Sigmoid colon (tissue), 7 donors: ENCODE measurements at regions of chr1 and their contacts with region 1.

Region 1: GRCh38 chr1:93909146-93910050 is at the start of gene GCLM:
- DNase-seq: peak; percentile 95
- H3K4me3 ChIP-seq: peak within 1 kb of the TSS; percentile 64 to 97 (median 75)
- H3K27ac ChIP-seq: peak within 1 kb of the TSS; percentile 83 to 93 (median 89)
- H3K4me1 ChIP-seq: peaks cover 0 to 16% (median 16%) of the 10 kb centered on the region in 4 donors
- H3K27me3 ChIP-seq: no peaks in the 10 kb centered on the region
- CTCF ChIP-seq: peak; percentile 40 to 87 (median 52)
- EP300 ChIP-seq: no peak
- POLR2A ChIP-seq: no peak
- total RNA-seq, gene GCLM: 3.9 to 6.4 (median 5.6) TPM

Region 2: GRCh38 chr1:93345633-93346420 is 563.6 kb before region 1 on chr1 and contains the start of gene DR1:
- intact Hi-C with region 1: loop called (anchors 10 kb)
- DNase-seq: peak; percentile 97
- H3K4me3 ChIP-seq: peak within 1 kb of the TSS; percentile 91 to 99 (median 96)
- H3K27ac ChIP-seq: peak within 1 kb of the TSS; percentile 94 to 98 (median 96)
- H3K4me1 ChIP-seq: peaks cover 0 to 69% (median 32%) of the 10 kb centered on the region in 4 donors
- H3K27me3 ChIP-seq: no peaks in the 10 kb centered on the region
- CTCF ChIP-seq: no peak
- EP300 ChIP-seq: peak in 2 of 4 donors; percentile 57 to 72
- POLR2A ChIP-seq: peak; percentile 84 to 90
- total RNA-seq, gene DR1: 19.9 to 24.2 (median 20.3) TPM

Region 3: GRCh38 chr1:93516180-93516579 is 393.2 kb before region 1 on chr1:
- intact Hi-C with region 1: no loop called
- DNase-seq: no peak
- H3K4me3 ChIP-seq: no peak overlapping the region
- H3K27ac ChIP-seq: no peak overlapping the region
- H3K4me1 ChIP-seq: no peaks in the 10 kb centered on the region
- H3K27me3 ChIP-seq: no peaks in the 10 kb centered on the region
- CTCF ChIP-seq: no peak
- EP300 ChIP-seq: no peak
- POLR2A ChIP-seq: no peak

Region 4: GRCh38 chr1:93768380-93768863 is 141.0 kb before region 1 on chr1:
- intact Hi-C with region 1: no loop called
- DNase-seq: no peak
- H3K4me3 ChIP-seq: no peak overlapping the region
- H3K27ac ChIP-seq: no peak overlapping the region
- H3K4me1 ChIP-seq: peaks cover 0 to 13% (median 8%) of the 10 kb centered on the region in 4 donors
- H3K27me3 ChIP-seq: no peaks in the 10 kb centered on the region
- CTCF ChIP-seq: no peak
- EP300 ChIP-seq: no peak
- POLR2A ChIP-seq: no peak

Region 5: GRCh38 chr1:93878889-93879586 is 30.4 kb before region 1 on chr1 and contains the start of gene DNTTIP2:
- intact Hi-C with region 1: loop called (anchors 1 kb)
- DNase-seq: peak; percentile 94
- H3K4me3 ChIP-seq: peak within 1 kb of the TSS; percentile 79 to 99 (median 94)
- H3K27ac ChIP-seq: peak within 1 kb of the TSS; percentile 89 to 97 (median 94)
- H3K4me1 ChIP-seq: peaks cover 0 to 26% (median 17%) of the 10 kb centered on the region in 4 donors
- H3K27me3 ChIP-seq: no peaks in the 10 kb centered on the region
- CTCF ChIP-seq: no peak
- EP300 ChIP-seq: peak in 1 of 4 donors; percentile 72
- POLR2A ChIP-seq: peak; percentile 88 to 94
- total RNA-seq, gene DNTTIP2: 24.6 to 48.9 (median 35.3) TPM